GM12878 (cell line): ENCODE measurements at regions of chrX and their contacts with region 1.

Region 1: GRCh38 chrX:79243691-79244090 is 99.2 kb downstream of the GPR174 start:
- DNase-seq: no peak
- ATAC-seq: no peak
- H3K4me3 ChIP-seq: no peak overlapping the region
- H3K27ac ChIP-seq: no peak overlapping the region
- H3K4me1 ChIP-seq: no peaks in the 10 kb centered on the region
- H3K27me3 ChIP-seq: no peaks in the 10 kb centered on the region
- CTCF ChIP-seq: no peak
- EP300 ChIP-seq: no peak
- POLR2A ChIP-seq: no peak
- RAD21 ChIP-seq: no peak

Region 2: DNA sequence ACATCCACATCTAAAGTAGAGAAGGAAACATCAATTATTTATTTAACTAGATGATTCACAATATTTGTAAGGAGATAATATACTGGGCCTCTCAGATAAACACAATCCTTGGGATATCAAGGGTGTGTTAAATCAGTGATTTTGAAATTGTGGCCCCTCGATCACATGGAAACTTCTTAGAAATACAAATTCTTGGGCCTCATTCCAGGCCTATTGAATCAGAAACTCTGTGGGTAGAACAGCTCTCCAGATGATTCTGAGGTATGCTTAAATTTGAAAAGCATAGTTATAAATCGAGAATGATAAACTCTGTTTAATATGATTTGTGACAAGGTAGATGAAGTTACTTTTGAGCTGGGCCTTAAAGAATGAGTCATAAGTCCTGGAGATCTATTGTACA is 163.6 kb before region 1 on chrX:
- CTCF ChIA-PET with region 1: no interaction called
- POLR2A ChIA-PET with region 1: no interaction called
- RAD21 ChIA-PET with region 1: no interaction called
- SMC1A ChIA-PET with region 1: no interaction called
- in situ Hi-C with region 1: no loop called
- intact Hi-C with region 1: no loop called
- DNase-seq: no peak
- ATAC-seq: no peak
- H3K4me3 ChIP-seq: no peak overlapping the region
- H3K27ac ChIP-seq: no peak overlapping the region
- H3K4me1 ChIP-seq: no peaks in the 10 kb centered on the region
- H3K27me3 ChIP-seq: no peaks in the 10 kb centered on the region
- CTCF ChIP-seq: no peak
- EP300 ChIP-seq: no peak
- POLR2A ChIP-seq: no peak
- RAD21 ChIP-seq: no peak

Region 3: GRCh38 chrX:79195027-79195426 is 48.7 kb before region 1 on chrX:
- CTCF ChIA-PET with region 1: no interaction called
- POLR2A ChIA-PET with region 1: no interaction called
- RAD21 ChIA-PET with region 1: no interaction called
- SMC1A ChIA-PET with region 1: interaction called, 3 read pairs
- in situ Hi-C with region 1: loop called (anchors 5 kb)
- intact Hi-C with region 1: no loop called
- DNase-seq: no peak
- ATAC-seq: no peak
- H3K4me3 ChIP-seq: no peak overlapping the region
- H3K27ac ChIP-seq: no peak overlapping the region
- H3K4me1 ChIP-seq: no peaks in the 10 kb centered on the region
- H3K27me3 ChIP-seq: no peaks in the 10 kb centered on the region
- CTCF ChIP-seq: no peak
- EP300 ChIP-seq: no peak
- POLR2A ChIP-seq: no peak
- RAD21 ChIP-seq: no peak